Gastrocnemius medialis (tissue), 4 donors: ENCODE measurements at regions of chr9 and their contacts with region 1.

Region 1: GRCh38 chr9:111393971-111394370 is 63.9 kb upstream of the OR2K2 start:
- DNase-seq: no peak
- ATAC-seq: no peak
- H3K4me3 ChIP-seq: no peak overlapping the region
- H3K27ac ChIP-seq: no peak overlapping the region
- H3K4me1 ChIP-seq: no peaks in the 10 kb centered on the region
- H3K27me3 ChIP-seq: no peaks in the 10 kb centered on the region
- CTCF ChIP-seq: no peak
- POLR2A ChIP-seq: no peak

Region 2: DNA sequence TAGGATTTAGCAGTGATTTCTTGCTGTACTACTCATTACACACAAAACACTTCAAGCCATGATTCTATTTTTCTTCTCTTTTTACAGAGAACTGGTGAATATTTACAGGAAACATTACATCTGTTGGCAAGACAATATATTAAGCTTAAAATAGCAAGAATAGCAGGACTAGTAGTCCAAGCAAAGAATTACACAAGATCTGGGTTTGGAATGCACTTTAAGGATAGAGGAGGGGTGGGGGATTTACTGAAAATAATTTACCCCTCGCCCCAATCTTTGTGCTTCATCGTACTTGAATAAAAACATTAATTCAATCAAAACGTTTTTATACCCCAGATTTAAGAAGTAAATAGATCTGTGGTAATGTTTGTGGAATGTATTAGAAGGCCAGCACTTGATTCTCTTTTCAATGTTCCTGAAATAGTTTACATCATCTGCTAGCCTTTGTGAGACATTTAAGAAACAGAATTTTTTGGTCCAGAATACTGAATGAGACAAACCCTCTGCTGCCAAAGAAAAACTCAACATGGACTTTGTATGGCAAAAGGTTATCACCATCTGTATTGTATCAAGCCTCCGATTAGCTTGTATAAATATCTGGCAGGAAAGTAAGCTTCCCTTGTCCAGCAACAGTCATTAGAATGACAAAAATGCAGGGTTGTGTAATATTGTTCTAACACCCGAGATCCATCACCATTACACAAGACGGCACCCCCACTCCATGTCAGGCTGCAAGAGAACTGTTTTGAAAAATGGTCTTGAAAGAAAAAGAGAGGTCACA is 838.2 kb before region 1 on chr9:
- in situ Hi-C with region 1: no loop called
- intact Hi-C with region 1: no loop called
- DNase-seq: peak; percentile 34 to 63
- ATAC-seq: peak; percentile 77 to 87
- H3K4me3 ChIP-seq: no peak overlapping the region
- H3K27ac ChIP-seq: peak overlapping the region; percentile 33 to 60 (median 48)
- H3K4me1 ChIP-seq: peaks cover 0 to 4% of the 10 kb centered on the region in 2 donors
- H3K27me3 ChIP-seq: no peaks in the 10 kb centered on the region
- CTCF ChIP-seq: no peak
- POLR2A ChIP-seq: no peak

Region 3: GRCh38 chr9:111040494-111040893 is 353.5 kb before region 1 on chr9:
- in situ Hi-C with region 1: no loop called
- intact Hi-C with region 1: no loop called
- DNase-seq: no peak
- ATAC-seq: no peak
- H3K4me3 ChIP-seq: no peak overlapping the region
- H3K27ac ChIP-seq: no peak overlapping the region
- H3K4me1 ChIP-seq: no peaks in the 10 kb centered on the region
- H3K27me3 ChIP-seq: peaks cover 16 to 27% (median 19%) of the 10 kb centered on the region in 3 donors
- CTCF ChIP-seq: no peak
- POLR2A ChIP-seq: no peak

Region 4: GRCh38 chr9:111253742-111254437 is 140.1 kb before region 1 on chr9:
- in situ Hi-C with region 1: no loop called
- intact Hi-C with region 1: no loop called
- DNase-seq: peak in 1 of 2 donors; percentile 22
- ATAC-seq: no peak
- H3K4me3 ChIP-seq: no peak overlapping the region
- H3K27ac ChIP-seq: no peak overlapping the region
- H3K4me1 ChIP-seq: no peaks in the 10 kb centered on the region
- H3K27me3 ChIP-seq: no peaks in the 10 kb centered on the region
- CTCF ChIP-seq: no peak
- POLR2A ChIP-seq: no peak

Region 5: GRCh38 chr9:111429175-111429574 is 35.2 kb after region 1 on chr9:
- in situ Hi-C with region 1: loop called in 1 of 4 experiments (anchors 10 kb)
- intact Hi-C with region 1: loop called (anchors 5 kb)
- DNase-seq: no peak
- ATAC-seq: no peak
- H3K4me3 ChIP-seq: no peak overlapping the region
- H3K27ac ChIP-seq: peak overlapping the region in 2 of 4 donors; percentile 31 to 83
- H3K4me1 ChIP-seq: peaks cover 0 to 8% of the 10 kb centered on the region in 2 donors
- H3K27me3 ChIP-seq: no peaks in the 10 kb centered on the region
- CTCF ChIP-seq: no peak
- POLR2A ChIP-seq: no peak

Region 6: GRCh38 chr9:111456529-111456928 is 62.6 kb after region 1 on chr9:
- in situ Hi-C with region 1: no loop called
- intact Hi-C with region 1: no loop called
- DNase-seq: no peak
- ATAC-seq: peak; percentile 16 to 50
- H3K4me3 ChIP-seq: no peak overlapping the region
- H3K27ac ChIP-seq: peak overlapping the region; percentile 65 to 87 (median 80)
- H3K4me1 ChIP-seq: peaks cover 77 to 93% of the 10 kb centered on the region in 2 donors
- H3K27me3 ChIP-seq: no peaks in the 10 kb centered on the region
- CTCF ChIP-seq: no peak
- POLR2A ChIP-seq: no peak